Endothelial cell of umbilical vein (primary cell): ENCODE measurements at regions of chr4 and their contacts with region 1.

Region 1: GRCh38 chr4:154982187-154983047 is 201.3 kb downstream of the RBM46 start:
- DNase-seq: peak; percentile 61
- H3K4me3 ChIP-seq: no peak overlapping the region
- H3K27ac ChIP-seq: no peak overlapping the region
- H3K4me1 ChIP-seq: no peaks in the 10 kb centered on the region
- H3K27me3 ChIP-seq: peaks cover 0 to 4% of the 10 kb centered on the region in 2 experiments
- CTCF ChIP-seq: peak; percentile 64
- POLR2A ChIP-seq: no peak

Region 2: GRCh38 chr4:154998284-154998683 is 15.9 kb after region 1 on chr4:
- CTCF ChIA-PET with region 1: no interaction called
- POLR2A ChIA-PET with region 1: no interaction called
- dilution Hi-C with region 1: no loop called
- intact Hi-C with region 1: no loop called
- DNase-seq: no peak
- H3K4me3 ChIP-seq: no peak overlapping the region
- H3K27ac ChIP-seq: no peak overlapping the region
- H3K4me1 ChIP-seq: no peaks in the 10 kb centered on the region
- H3K27me3 ChIP-seq: no peaks in the 10 kb centered on the region
- CTCF ChIP-seq: no peak
- POLR2A ChIP-seq: no peak

Region 3: DNA sequence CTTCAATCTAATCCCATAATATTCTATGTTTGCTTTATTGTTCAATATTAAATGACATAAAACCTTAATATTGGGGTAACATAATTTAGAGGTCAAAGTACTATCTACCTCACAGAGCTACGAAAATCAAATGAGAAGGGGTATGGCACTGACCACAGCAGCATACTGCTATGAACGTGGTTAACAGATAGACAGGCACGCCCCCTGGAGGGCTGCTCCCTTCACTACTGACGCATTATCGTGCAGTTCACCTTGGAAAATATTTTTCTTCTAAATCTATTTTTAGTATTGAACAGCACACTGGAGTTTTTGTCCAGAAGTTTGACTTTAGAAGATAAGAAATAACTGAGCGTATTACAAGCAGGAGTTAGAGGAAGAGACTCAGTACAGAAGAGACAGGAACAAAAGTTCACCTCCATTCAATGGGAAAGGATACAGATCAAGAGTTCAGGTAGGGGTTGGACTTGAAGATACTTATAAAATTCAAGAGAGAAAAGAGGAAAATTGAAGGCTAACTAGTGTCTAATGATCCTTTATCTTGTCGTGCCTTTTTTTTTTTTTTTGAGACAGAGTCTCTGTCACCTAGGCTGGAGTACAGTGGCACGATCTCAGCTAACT is 371.6 kb after region 1 on chr4:
- CTCF ChIA-PET with region 1: interaction called, 70 read pairs
- POLR2A ChIA-PET with region 1: no interaction called
- dilution Hi-C with region 1: no loop called
- intact Hi-C with region 1: loop called (anchors 1 kb)
- DNase-seq: peak; percentile 76
- H3K4me3 ChIP-seq: no peak overlapping the region
- H3K27ac ChIP-seq: no peak overlapping the region
- H3K4me1 ChIP-seq: no peaks in the 10 kb centered on the region
- H3K27me3 ChIP-seq: no peaks in the 10 kb centered on the region
- CTCF ChIP-seq: peak; percentile 82 to 83
- POLR2A ChIP-seq: no peak

Region 4: DNA sequence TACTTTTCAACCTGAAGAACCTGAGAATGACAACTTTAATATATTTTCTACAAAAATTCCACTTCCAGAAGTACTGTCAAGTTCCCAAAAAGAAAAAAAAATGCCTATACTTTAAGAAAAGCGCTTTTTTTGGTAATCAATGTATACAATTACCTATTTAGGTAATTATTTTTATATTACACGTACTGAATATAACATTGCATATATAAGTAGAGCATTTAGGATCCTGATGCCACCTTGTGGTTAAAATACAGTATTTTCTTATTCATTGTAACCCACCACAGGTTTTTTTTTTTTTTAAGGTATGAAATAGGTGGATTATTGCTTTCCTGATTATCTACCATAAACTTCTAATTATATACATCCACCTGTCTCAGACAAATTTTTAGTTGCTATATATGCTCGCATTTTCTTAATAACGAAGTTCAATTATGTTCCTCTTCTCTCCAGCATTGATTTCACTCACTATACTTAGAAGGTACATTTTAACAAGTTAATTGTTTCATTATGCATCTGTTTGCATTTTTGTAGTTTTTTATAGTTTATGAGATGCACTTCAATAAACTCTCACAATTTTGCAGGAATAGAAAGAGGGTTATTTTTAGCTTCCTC is 389.1 kb after region 1 on chr4:
- CTCF ChIA-PET with region 1: interaction called, 6 read pairs
- POLR2A ChIA-PET with region 1: no interaction called
- dilution Hi-C with region 1: no loop called
- intact Hi-C with region 1: loop called (anchors 1 kb)
- DNase-seq: peak; percentile 38
- H3K4me3 ChIP-seq: no peak overlapping the region
- H3K27ac ChIP-seq: no peak overlapping the region
- H3K4me1 ChIP-seq: peaks cover 4% of the 10 kb centered on the region
- H3K27me3 ChIP-seq: peaks cover 0 to 6% of the 10 kb centered on the region in 2 experiments
- CTCF ChIP-seq: peak in 1 of 2 donors; percentile 17
- POLR2A ChIP-seq: no peak